HCT116 (cell line): ENCODE measurements at regions of chr16 and their contacts with region 1.

Region 1: DNA sequence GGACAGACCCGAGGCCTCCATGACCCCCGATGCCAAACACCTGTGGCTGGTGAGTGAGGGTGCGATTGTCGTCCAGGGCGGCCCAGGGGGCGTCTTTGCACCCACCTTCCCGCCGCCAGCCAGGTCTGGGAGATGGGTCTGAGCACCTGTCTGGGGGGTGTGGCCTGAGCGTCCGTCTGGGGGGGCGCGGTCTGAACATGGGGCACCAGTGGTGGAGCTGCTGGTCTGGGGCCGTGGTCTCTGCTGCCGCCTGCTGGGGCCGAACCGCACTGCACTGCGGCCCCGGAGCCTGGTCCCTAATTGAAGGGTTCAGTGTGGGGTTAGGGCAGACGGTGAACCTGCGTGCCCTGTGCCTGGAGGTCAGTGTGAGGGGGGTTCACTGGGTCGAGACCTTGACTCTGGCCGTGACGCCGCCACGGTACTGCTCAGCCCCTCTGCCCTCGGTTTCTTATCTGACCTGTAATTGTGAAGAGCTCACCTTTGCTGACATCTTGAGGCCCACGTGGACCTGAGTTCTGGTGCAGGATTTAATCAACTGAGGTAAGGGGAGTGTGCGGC is 12.6 kb upstream of the TCF25 start:
- DNase-seq: peak; percentile 51
- ATAC-seq: peak; percentile 98
- H3K4me3 ChIP-seq: no peak overlapping the region
- H3K27ac ChIP-seq: no peak overlapping the region
- H3K4me1 ChIP-seq: peaks cover 8 to 9% of the 10 kb centered on the region in 2 experiments
- H3K27me3 ChIP-seq: no peaks in the 10 kb centered on the region
- CTCF ChIP-seq: peak; percentile 94 to 100 (median 100)
- POLR2A ChIP-seq: no peak
- RAD21 ChIP-seq: peak; percentile 100

Region 2: GRCh38 chr16:89749647-89750046 is 111.2 kb before region 1 on chr16:
- CTCF ChIA-PET with region 1: interaction called, 14 read pairs
- POLR2A ChIA-PET with region 1: no interaction called
- RAD21 ChIA-PET with region 1: interaction called in 1 of 2 experiments, 3 read pairs
- intact Hi-C with region 1: loop called (anchors 1 kb)
- DNase-seq: no peak
- ATAC-seq: no peak
- H3K4me3 ChIP-seq: no peak overlapping the region
- H3K27ac ChIP-seq: no peak overlapping the region
- H3K4me1 ChIP-seq: no peaks in the 10 kb centered on the region
- H3K27me3 ChIP-seq: no peaks in the 10 kb centered on the region
- CTCF ChIP-seq: no peak
- POLR2A ChIP-seq: no peak
- RAD21 ChIP-seq: no peak

Region 3: GRCh38 chr16:89873972-89874689 is 13.3 kb after region 1 on chr16:
- CTCF ChIA-PET with region 1: interaction called, 20 read pairs
- POLR2A ChIA-PET with region 1: interaction called, 7 read pairs
- RAD21 ChIA-PET with region 1: no interaction called
- intact Hi-C with region 1: no loop called
- DNase-seq: peak; percentile 94
- ATAC-seq: peak; percentile 76
- H3K4me3 ChIP-seq: peak overlapping the region; percentile 87 to 91
- H3K27ac ChIP-seq: peak overlapping the region; percentile 100
- H3K4me1 ChIP-seq: peaks cover 12 to 23% of the 10 kb centered on the region in 2 experiments
- H3K27me3 ChIP-seq: no peaks in the 10 kb centered on the region
- CTCF ChIP-seq: no peak
- POLR2A ChIP-seq: no peak
- RAD21 ChIP-seq: no peak